ENCODE measurements at regions of chr3 and their contacts with region 1.

Region 1: GRCh38 chr3:111594205-111594604 is 941 bp downstream of the ZBED2 start:
- DNase-seq: no peak
- ATAC-seq: peak; percentile 12
- H3K4me3 Mint-ChIP-seq: peak overlapping the region; percentile 97
- H3K27ac Mint-ChIP-seq: peak overlapping the region; percentile 97
- H3K4me1 Mint-ChIP-seq: peaks cover 64% of the 10 kb centered on the region
- H3K27me3 Mint-ChIP-seq: no peaks in the 10 kb centered on the region
- CTCF ChIP-seq: no peak

Region 2: DNA sequence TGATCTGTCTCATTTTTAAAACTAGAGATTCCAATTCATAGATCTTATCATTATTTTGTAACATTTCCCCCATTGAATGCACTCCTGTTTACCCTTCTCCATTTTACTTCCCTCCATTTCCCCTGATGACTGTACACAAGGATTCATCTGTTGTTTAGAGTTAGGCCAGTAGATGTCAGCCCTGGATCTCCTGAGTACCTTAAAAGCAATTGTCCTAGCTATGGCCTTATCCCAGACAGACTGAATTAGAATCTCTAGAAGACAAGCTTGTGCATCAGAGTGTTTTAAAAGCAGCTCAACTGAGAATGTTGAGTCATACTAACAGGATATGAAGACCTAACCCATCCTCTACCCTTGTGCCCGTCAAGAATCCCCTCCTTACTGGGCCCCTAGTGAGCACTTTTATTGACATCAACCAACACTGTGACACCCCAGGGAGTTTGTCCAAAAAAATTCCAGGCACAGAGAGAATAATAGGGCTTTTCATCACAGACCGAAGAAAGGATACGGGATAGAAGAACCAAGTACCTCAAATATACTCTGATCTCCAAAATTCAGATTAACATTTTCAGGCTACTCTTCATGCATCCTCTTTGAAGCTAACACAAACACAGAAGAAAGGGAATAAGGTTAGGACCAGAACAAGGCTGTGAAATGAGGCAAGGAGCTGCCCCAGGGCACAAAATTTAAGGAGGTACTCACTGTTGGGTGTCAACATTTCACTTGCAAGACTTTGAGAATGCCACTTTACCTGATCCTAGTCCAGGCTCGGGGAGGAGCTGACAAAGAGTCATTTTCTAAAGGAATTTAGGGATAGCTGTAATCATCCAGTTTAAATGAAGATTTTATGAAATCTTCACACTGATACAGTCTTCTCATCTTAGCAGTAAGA is 16.2 kb before region 1 on chr3:
- CTCF ChIA-PET with region 1: interaction called, 18 read pairs
- POLR2A ChIA-PET with region 1: interaction called, 14 read pairs
- intact Hi-C with region 1: no loop called
- DNase-seq: no peak
- ATAC-seq: peak; percentile 88
- H3K4me3 Mint-ChIP-seq: no peak overlapping the region
- H3K27ac Mint-ChIP-seq: peak overlapping the region; percentile 73
- H3K4me1 Mint-ChIP-seq: peaks cover 80% of the 10 kb centered on the region
- H3K27me3 Mint-ChIP-seq: no peaks in the 10 kb centered on the region
- CTCF ChIP-seq: peak; percentile 64

Region 3: GRCh38 chr3:111610189-111610588 is 16.0 kb after region 1 on chr3:
- CTCF ChIA-PET with region 1: interaction called, 30 read pairs
- POLR2A ChIA-PET with region 1: interaction called, 32 read pairs
- intact Hi-C with region 1: no loop called
- DNase-seq: peak; percentile 68
- ATAC-seq: peak; percentile 53
- H3K4me3 Mint-ChIP-seq: peak overlapping the region; percentile 63
- H3K27ac Mint-ChIP-seq: peak overlapping the region; percentile 93
- H3K4me1 Mint-ChIP-seq: peaks cover 96% of the 10 kb centered on the region
- H3K27me3 Mint-ChIP-seq: no peaks in the 10 kb centered on the region
- CTCF ChIP-seq: no peak

Region 4: GRCh38 chr3:111917300-111917699 is 323.1 kb after region 1 on chr3:
- CTCF ChIA-PET with region 1: no interaction called
- POLR2A ChIA-PET with region 1: no interaction called
- intact Hi-C with region 1: no loop called
- DNase-seq: no peak
- ATAC-seq: no peak
- H3K4me3 Mint-ChIP-seq: no peak overlapping the region
- H3K27ac Mint-ChIP-seq: no peak overlapping the region
- H3K4me1 Mint-ChIP-seq: no peaks in the 10 kb centered on the region
- H3K27me3 Mint-ChIP-seq: no peaks in the 10 kb centered on the region
- CTCF ChIP-seq: no peak

Measured in activated CD8-positive, alpha-beta T cell treated with anti-CD3 and anti-CD28 coated beads for 36 hours (primary cell).